ENCODE measurements at regions of chr7 and their contacts with region 1.

Region 1: GRCh38 chr7:99392677-99393354 is 15.6 kb downstream of the PDAP1 start:
- DNase-seq: peak; percentile 79 to 85 (median 83)
- ATAC-seq: peak; percentile 73 to 85 (median 82)
- H3K4me3 ChIP-seq: peak overlapping the region; percentile 27 to 68 (median 57)
- H3K27ac ChIP-seq: peak overlapping the region; percentile 12 to 79 (median 66)
- H3K4me1 ChIP-seq: peaks cover 0 to 21% (median 15%) of the 10 kb centered on the region in 12 donors
- H3K27me3 ChIP-seq: no peaks in the 10 kb centered on the region
- CTCF ChIP-seq: peak in 1 of 12 donors; percentile 21
- POLR2A ChIP-seq: peak in 1 of 2 donors; percentile 52

Region 2: DNA sequence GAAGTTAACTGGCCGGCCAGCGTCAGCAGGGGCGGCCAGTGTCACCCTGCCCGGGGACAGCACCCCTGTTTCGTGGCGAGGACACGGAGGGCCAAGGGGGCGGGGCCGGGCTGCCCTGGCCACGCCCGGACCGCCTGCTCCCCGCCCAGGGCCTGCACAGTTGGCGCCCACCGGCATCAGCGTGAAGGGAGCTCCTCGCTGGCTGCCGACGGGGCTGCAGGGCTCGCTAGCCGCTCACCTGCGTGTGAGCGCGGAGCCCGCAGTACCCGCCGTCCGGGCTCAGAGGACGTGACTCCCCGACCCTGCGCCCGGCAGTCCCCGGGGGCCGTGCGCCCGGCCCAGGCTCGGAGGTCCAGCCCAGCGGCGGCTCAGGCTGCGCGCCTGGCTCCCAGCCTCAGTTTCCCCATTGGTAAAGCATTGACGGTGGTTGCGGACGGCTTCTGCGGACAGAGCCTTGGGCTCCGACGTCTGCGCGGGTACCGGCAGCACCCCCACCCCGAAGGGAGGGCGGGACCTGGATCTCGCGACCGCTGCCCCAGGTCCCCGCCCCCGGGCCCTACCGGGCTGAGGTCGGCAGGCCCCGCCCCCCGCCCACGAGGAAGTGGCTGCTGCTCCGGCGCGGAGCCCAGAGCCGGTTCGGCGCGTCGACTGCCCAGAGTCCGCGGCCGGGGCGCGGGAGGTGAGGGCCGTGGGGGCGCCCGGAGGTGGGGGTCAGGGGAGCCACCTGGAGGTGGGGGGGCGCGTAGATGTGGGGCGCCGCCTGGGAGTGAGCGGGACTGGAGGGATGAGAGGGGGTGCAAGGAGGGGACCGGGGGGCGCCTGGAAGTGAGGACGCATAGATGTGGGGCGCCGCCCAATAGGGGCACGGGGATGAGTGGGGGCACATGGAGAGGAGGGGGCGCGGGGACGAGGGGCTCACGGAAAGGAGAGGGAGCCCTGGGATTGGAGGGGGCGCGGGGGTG is 18.4 kb before region 1 on chr7 and contains the start of gene ARPC1B:
- intact Hi-C with region 1: loop called in 1 of 10 experiments (anchors 2 kb)
- DNase-seq: peak; percentile 87 to 93 (median 90)
- ATAC-seq: peak; percentile 16 to 77 (median 69)
- H3K4me3 ChIP-seq: peak within 1 kb of the TSS; percentile 71 to 96 (median 90)
- H3K27ac ChIP-seq: peak within 1 kb of the TSS; percentile 87 to 97 (median 94)
- H3K4me1 ChIP-seq: peaks cover 0 to 58% (median 20%) of the 10 kb centered on the region in 12 donors
- H3K27me3 ChIP-seq: no peaks in the 10 kb centered on the region
- CTCF ChIP-seq: no peak
- POLR2A ChIP-seq: peak in 1 of 2 donors; percentile 55
- total RNA-seq, gene ARPC1B: 17.2 to 142 (median 37.1) TPM

Region 3: GRCh38 chr7:99531354-99531765 is 138.5 kb after region 1 on chr7:
- intact Hi-C with region 1: no loop called
- DNase-seq: no peak
- ATAC-seq: no peak
- H3K4me3 ChIP-seq: no peak overlapping the region
- H3K27ac ChIP-seq: no peak overlapping the region
- H3K4me1 ChIP-seq: no peaks in the 10 kb centered on the region
- H3K27me3 ChIP-seq: no peaks in the 10 kb centered on the region
- CTCF ChIP-seq: no peak
- POLR2A ChIP-seq: no peak

Region 4: GRCh38 chr7:100626530-100627237 is 1233.9 kb after region 1 on chr7:
- intact Hi-C with region 1: no loop called
- DNase-seq: peak; percentile 78 to 91 (median 84)
- ATAC-seq: peak; percentile 89 to 99 (median 96)
- H3K4me3 ChIP-seq: peak overlapping the region in 9 of 12 donors; percentile 26 to 51 (median 43)
- H3K27ac ChIP-seq: peak overlapping the region in 1 of 12 donors; percentile 67
- H3K4me1 ChIP-seq: peaks cover 0 to 12% (median 4%) of the 10 kb centered on the region in 12 donors
- H3K27me3 ChIP-seq: no peaks in the 10 kb centered on the region
- CTCF ChIP-seq: no peak
- POLR2A ChIP-seq: no peak

Measured in heart left ventricle (tissue), 16 donors.